CD14-positive monocyte (primary cell): ENCODE measurements at regions of chr9 and their contacts with region 1.

Region 1: GRCh38 chr9:113657703-113658544 is 194.4 kb downstream of the RGS3 start:
- DNase-seq: peak; percentile 67 to 80 (median 73)
- H3K4me3 ChIP-seq: no peak overlapping the region
- H3K4me3 Mint-ChIP-seq: no peak overlapping the region
- H3K27ac ChIP-seq: no peak overlapping the region
- H3K27ac Mint-ChIP-seq: peak overlapping the region in 1 of 7 donors; percentile 25
- H3K4me1 ChIP-seq: peaks cover 5 to 11% of the 10 kb centered on the region in 2 donors
- H3K4me1 Mint-ChIP-seq: peaks cover 15% of the 10 kb centered on the region
- H3K27me3 ChIP-seq: no peaks in the 10 kb centered on the region
- H3K27me3 Mint-ChIP-seq: peaks cover 0 to 8% (median 7%) of the 10 kb centered on the region in 3 donors
- CTCF ChIP-seq: peak; percentile 94

Region 2: DNA sequence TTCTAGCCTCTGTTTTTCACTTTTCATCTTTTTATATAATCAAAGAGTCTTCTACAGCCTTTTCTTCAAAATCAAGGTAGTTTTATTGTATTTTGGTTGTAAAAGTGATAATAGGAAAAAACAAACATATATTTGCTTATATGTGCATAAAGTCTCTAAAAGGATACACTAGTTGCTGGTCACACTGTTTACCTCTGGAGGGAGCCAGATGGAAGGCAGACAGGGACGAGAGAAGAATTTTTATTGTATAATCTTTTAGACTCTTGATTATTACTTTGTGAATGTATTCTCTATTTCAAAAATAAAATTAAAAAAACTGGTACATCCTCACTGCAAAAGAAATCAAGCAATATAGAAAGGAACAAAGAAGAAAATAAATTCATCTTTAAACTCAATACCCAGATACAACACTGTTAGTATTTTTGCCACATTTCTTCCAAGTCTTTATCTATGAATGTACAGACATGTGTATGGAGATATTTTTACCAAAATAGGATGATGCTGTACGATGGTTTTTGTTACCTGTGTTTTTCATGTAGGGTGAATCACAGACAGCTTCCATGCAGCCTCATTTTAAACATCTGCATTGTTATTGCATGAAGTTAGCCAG is 348.6 kb before region 1 on chr9:
- intact Hi-C with region 1: loop called in 1 of 2 experiments (anchors 5 kb)
- DNase-seq: peak; percentile 6 to 12 (median 8)
- H3K4me3 ChIP-seq: no peak overlapping the region
- H3K4me3 Mint-ChIP-seq: no peak overlapping the region
- H3K27ac ChIP-seq: no peak overlapping the region
- H3K27ac Mint-ChIP-seq: no peak overlapping the region
- H3K4me1 ChIP-seq: no peaks in the 10 kb centered on the region
- H3K4me1 Mint-ChIP-seq: no peaks in the 10 kb centered on the region
- H3K27me3 ChIP-seq: no peaks in the 10 kb centered on the region
- H3K27me3 Mint-ChIP-seq: peaks cover 0 to 2% (median 1%) of the 10 kb centered on the region in 3 donors
- CTCF ChIP-seq: peak; percentile 73

Region 3: GRCh38 chr9:113322671-113323070 is 335.3 kb before region 1 on chr9:
- intact Hi-C with region 1: no loop called
- DNase-seq: no peak
- H3K4me3 ChIP-seq: no peak overlapping the region
- H3K4me3 Mint-ChIP-seq: no peak overlapping the region
- H3K27ac ChIP-seq: no peak overlapping the region
- H3K27ac Mint-ChIP-seq: no peak overlapping the region
- H3K4me1 ChIP-seq: no peaks in the 10 kb centered on the region
- H3K4me1 Mint-ChIP-seq: no peaks in the 10 kb centered on the region
- H3K27me3 ChIP-seq: no peaks in the 10 kb centered on the region
- H3K27me3 Mint-ChIP-seq: peaks cover 0 to 1% (median 0%) of the 10 kb centered on the region in 3 donors
- CTCF ChIP-seq: no peak

Region 4: GRCh38 chr9:113376634-113377567 is 281.0 kb before region 1 on chr9 and contains the start of gene HDHD3:
- intact Hi-C with region 1: no loop called
- DNase-seq: peak; percentile 52 to 56 (median 56)
- H3K4me3 ChIP-seq: peak within 1 kb of the TSS; percentile 67 to 92 (median 89)
- H3K4me3 Mint-ChIP-seq: peak within 1 kb of the TSS; percentile 82 to 90
- H3K27ac ChIP-seq: peak within 1 kb of the TSS in 1 of 2 donors; percentile 68
- H3K27ac Mint-ChIP-seq: peak within 1 kb of the TSS in 3 of 7 donors; percentile 30 to 83 (median 46)
- H3K4me1 ChIP-seq: peaks cover 9 to 11% of the 10 kb centered on the region in 2 donors
- H3K4me1 Mint-ChIP-seq: peaks cover 16% of the 10 kb centered on the region
- H3K27me3 ChIP-seq: no peaks in the 10 kb centered on the region
- H3K27me3 Mint-ChIP-seq: peaks cover 0 to 2% (median 2%) of the 10 kb centered on the region in 3 donors
- CTCF ChIP-seq: no peak
- polyA plus RNA-seq, gene HDHD3: 8.3 to 12.0 (median 9.2) TPM

Region 5: GRCh38 chr9:113401027-113401792 is 256.7 kb before region 1 on chr9 and contains the start of gene ALAD:
- intact Hi-C with region 1: loop called in 1 of 2 experiments (anchors 1 kb)
- DNase-seq: peak; percentile 97 to 99 (median 97)
- H3K4me3 ChIP-seq: peak within 1 kb of the TSS; percentile 79 to 96 (median 84)
- H3K4me3 Mint-ChIP-seq: peak within 1 kb of the TSS; percentile 87 to 93
- H3K27ac ChIP-seq: peak within 1 kb of the TSS; percentile 36 to 77
- H3K27ac Mint-ChIP-seq: peak within 1 kb of the TSS; percentile 79 to 93 (median 87)
- H3K4me1 ChIP-seq: peaks cover 53 to 63% of the 10 kb centered on the region in 2 donors
- H3K4me1 Mint-ChIP-seq: peaks cover 63% of the 10 kb centered on the region
- H3K27me3 ChIP-seq: no peaks in the 10 kb centered on the region
- H3K27me3 Mint-ChIP-seq: peaks cover 0 to under 1% (median 0%) of the 10 kb centered on the region in 3 donors
- CTCF ChIP-seq: peak; percentile 95
- polyA plus RNA-seq, gene ALAD: 17.1 to 24.6 (median 20.9) TPM

Region 6: DNA sequence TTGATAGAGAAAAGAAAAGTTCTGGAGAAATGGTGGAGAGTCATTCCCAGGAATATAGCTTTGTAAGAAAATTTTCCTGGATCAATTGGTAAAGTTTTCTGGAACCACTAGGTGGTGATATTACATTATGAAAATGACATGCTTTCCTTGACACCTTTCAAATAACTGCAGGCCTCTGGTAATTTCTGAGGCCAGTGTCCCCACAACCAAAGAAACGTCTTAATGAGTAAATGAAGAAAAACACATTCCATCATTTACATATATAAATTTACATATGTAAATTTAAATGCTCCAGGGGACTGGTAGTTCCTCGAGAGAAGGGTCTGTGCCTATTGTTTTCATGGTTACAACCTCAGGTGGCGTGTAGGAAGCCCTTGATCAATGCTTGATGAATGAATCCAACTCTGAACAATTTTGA is 211.6 kb before region 1 on chr9:
- intact Hi-C with region 1: loop called (anchors 2 kb)
- DNase-seq: peak in 2 of 3 donors; percentile 25 to 52
- H3K4me3 ChIP-seq: no peak overlapping the region
- H3K4me3 Mint-ChIP-seq: no peak overlapping the region
- H3K27ac ChIP-seq: no peak overlapping the region
- H3K27ac Mint-ChIP-seq: no peak overlapping the region
- H3K4me1 ChIP-seq: no peaks in the 10 kb centered on the region
- H3K4me1 Mint-ChIP-seq: no peaks in the 10 kb centered on the region
- H3K27me3 ChIP-seq: no peaks in the 10 kb centered on the region
- H3K27me3 Mint-ChIP-seq: no peaks in the 10 kb centered on the region
- CTCF ChIP-seq: peak; percentile 87

Region 7: DNA sequence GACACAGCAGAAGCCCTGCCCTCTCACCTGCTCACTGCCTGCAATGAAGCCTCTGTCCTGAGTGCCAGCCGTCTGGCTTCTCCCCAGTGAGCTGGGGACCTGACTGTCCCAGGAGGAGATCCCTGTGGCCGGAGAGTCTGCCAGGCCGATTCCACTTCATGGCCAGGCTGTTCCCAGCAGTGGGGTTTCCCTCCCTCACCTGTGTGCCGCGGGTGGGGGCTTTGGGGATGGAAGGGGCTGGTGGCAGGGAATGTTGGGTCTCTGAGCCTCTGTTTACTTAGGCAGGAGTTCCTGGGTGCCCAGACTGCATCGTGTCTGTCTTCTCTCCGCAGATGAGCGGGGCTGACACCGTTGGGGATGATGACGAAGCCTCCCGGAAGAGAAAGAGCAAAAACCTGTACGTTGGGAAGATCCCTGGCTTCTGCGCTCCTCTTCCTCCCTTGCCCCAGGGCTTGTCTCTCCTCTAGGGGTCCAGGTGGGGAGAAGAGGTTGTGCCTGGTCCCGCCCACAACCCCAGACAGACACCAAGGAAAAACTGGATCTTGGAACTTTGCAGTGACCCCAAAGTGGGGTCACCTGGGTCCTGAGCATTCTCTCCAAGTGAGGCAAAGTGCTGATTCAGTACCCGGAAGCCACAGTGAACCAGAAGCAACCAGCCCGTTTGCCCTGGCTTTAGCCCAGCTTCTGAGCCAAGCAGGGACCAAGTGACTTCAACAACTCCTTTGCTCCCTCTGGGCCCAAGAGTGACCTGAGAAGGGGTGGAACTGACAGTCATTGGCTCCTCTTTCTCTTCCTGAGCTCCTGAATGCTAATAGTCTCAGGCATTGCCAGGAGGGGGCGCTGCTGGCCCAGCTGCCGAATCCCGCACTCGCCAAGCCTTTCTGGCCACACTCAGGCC is 66.7 kb before region 1 on chr9:
- intact Hi-C with region 1: loop called (anchors 5 kb)
- DNase-seq: peak in 2 of 3 donors; percentile 48 to 49
- H3K4me3 ChIP-seq: no peak overlapping the region
- H3K4me3 Mint-ChIP-seq: no peak overlapping the region
- H3K27ac ChIP-seq: no peak overlapping the region
- H3K27ac Mint-ChIP-seq: peak overlapping the region in 3 of 7 donors; percentile 2 to 11 (median 2)
- H3K4me1 ChIP-seq: peaks cover 48 to 62% of the 10 kb centered on the region in 2 donors
- H3K4me1 Mint-ChIP-seq: peaks cover 59% of the 10 kb centered on the region
- H3K27me3 ChIP-seq: no peaks in the 10 kb centered on the region
- H3K27me3 Mint-ChIP-seq: no peaks in the 10 kb centered on the region
- CTCF ChIP-seq: peak; percentile 82